ENCODE measurements at regions of chr18 and their contacts with region 1.

Region 1: GRCh38 chr18:36942264-36942663 is 113.3 kb downstream of the KIAA1328 start:
- DNase-seq: no peak
- ATAC-seq: peak; percentile 53
- H3K4me3 Mint-ChIP-seq: no peak overlapping the region
- H3K27ac Mint-ChIP-seq: no peak overlapping the region
- H3K4me1 Mint-ChIP-seq: no peaks in the 10 kb centered on the region
- H3K27me3 Mint-ChIP-seq: no peaks in the 10 kb centered on the region
- CTCF ChIP-seq: peak; percentile 89

Region 2: DNA sequence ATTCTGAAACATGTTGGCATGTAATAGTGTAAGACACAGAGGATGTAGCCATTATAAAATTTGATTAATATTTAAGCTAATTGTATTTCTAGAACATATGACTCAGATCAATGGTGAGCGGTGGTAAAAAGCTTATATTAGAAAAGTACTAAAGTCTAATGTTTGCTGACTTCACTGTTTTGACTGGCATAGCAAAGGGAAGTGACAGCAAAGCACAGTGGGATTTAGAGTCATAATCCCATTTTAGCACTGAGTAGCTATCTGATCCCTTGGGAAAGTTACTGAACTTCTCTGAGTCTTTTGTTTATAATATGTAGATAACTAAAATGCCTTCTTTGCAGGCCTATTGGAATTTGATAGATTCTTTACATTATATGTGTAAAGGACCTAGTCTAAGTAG is 52.9 kb before region 1 on chr18:
- CTCF ChIA-PET with region 1: no interaction called
- POLR2A ChIA-PET with region 1: no interaction called
- intact Hi-C with region 1: no loop called
- DNase-seq: no peak
- ATAC-seq: no peak
- H3K4me3 Mint-ChIP-seq: no peak overlapping the region
- H3K27ac Mint-ChIP-seq: no peak overlapping the region
- H3K4me1 Mint-ChIP-seq: no peaks in the 10 kb centered on the region
- H3K27me3 Mint-ChIP-seq: no peaks in the 10 kb centered on the region
- CTCF ChIP-seq: no peak

Region 3: DNA sequence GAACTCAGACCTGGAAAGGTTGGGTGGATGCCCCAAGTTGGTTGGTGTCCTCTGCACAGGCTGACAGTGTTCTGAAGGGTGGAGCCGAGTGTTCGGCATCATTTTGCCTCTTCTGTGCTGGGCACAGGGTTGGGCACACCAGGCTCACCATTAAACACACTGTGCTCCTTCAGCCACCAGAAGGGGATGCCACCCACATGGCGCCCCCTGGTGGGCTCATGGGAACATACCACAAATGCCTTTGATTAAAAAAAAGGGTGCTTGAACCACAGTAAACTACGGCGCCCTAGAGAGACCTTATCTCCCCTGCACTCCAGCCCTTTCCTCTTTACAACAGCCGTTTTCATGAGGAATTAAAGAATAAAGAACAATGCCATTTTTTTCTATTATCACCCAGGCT is 533.9 kb after region 1 on chr18:
- CTCF ChIA-PET with region 1: interaction called, 4 read pairs
- POLR2A ChIA-PET with region 1: no interaction called
- intact Hi-C with region 1: loop called (anchors 10 kb)
- DNase-seq: peak; percentile 53
- ATAC-seq: no peak
- H3K4me3 Mint-ChIP-seq: no peak overlapping the region
- H3K27ac Mint-ChIP-seq: no peak overlapping the region
- H3K4me1 Mint-ChIP-seq: no peaks in the 10 kb centered on the region
- H3K27me3 Mint-ChIP-seq: peaks cover 9% of the 10 kb centered on the region
- CTCF ChIP-seq: peak; percentile 54

Measured in activated CD8-positive, alpha-beta T cell treated with anti-CD3 and anti-CD28 coated beads for 36 hours (primary cell).